ENCODE measurements at regions of chr16 and their contacts with region 1.

Region 1: DNA sequence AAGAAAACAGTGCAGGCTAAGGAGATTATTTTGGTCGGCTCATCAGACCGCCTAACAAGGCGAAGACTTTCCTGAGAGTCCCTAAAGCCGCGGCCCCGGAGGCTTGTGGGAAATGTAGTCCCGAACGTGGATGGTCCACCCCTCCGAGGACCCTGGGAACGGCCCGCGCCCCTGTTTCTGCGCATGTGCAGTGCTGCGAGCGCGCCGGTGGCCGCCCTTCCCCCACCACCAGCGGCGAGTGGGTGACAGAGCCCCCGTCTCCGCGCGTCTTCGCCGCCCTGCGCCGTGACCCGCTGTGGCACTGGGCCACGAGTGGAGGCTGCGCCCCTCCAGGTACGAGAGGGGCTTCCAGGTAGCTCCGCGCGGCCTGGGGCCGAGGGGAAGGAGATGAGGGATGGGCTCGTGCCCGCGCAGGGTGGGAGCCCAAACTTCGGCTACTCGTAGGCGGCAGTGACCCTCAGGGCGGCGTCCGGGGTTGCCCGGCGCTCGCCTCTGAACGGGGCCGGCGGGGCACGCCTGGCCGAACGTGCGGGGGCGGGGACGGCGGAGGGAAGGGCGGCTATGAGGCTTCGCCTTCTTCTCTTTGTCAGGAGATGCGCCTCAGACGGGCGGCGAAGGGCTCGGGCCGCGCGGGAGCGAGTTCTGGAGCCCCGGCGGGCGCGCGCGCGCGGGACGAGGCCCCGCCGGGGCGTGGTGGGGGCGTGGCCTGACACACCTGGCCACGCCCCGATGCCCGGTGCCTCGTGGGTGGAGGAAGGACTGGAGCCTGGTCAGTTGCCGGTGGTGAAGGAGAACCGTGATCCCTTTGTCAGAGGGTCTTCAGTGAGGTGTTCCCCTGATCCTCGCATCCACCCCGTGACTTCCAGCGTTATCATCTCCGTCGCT is at the start of gene ZFP1:
- DNase-seq: peak; percentile 83 to 98
- H3K4me3 ChIP-seq: peak within 1 kb of the TSS; percentile 99 to 100
- H3K27ac ChIP-seq: peak within 1 kb of the TSS; percentile 93 to 99
- H3K4me1 ChIP-seq: peaks cover 0 to 6% of the 10 kb centered on the region in 2 donors
- H3K27me3 ChIP-seq: no peaks in the 10 kb centered on the region
- CTCF ChIP-seq: no peak
- total RNA-seq, gene ZFP1: 6.8 TPM

Region 2: DNA sequence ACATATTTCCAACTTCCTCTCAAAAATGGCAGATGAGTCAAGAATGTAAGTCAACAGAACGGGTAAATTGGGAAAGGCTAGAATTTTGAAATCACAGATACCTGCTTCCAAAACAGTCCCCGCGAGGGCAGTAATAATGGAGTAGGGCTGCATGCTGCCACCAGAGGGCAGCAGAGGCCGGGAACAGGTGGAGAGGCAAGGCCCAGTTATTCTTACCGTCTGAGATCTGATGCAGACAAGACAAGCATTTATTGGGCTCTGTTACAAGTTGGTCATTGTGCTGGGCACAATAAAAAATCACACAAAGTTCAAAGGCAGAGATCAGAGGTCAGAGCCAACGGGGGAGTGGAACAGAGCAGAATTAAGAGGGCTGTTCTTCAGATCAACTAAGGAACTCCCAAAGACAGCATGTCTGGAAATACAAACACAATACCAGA is 439.1 kb before region 1 on chr16:
- intact Hi-C with region 1: loop called (anchors 10 kb)
- DNase-seq: peak in 1 of 2 donors; percentile 81
- H3K4me3 ChIP-seq: no peak overlapping the region
- H3K27ac ChIP-seq: no peak overlapping the region
- H3K4me1 ChIP-seq: no peaks in the 10 kb centered on the region
- H3K27me3 ChIP-seq: no peaks in the 10 kb centered on the region
- CTCF ChIP-seq: peak; percentile 82 to 95 (median 93)

Region 3: GRCh38 chr16:74984535-74985296 is 163.8 kb before region 1 on chr16 and contains the start of gene WDR59:
- intact Hi-C with region 1: loop called (anchors 1 kb)
- DNase-seq: peak; percentile 100
- H3K4me3 ChIP-seq: peak within 1 kb of the TSS; percentile 81 to 83
- H3K27ac ChIP-seq: peak within 1 kb of the TSS; percentile 58 to 73
- H3K4me1 ChIP-seq: peaks cover 0 to 9% of the 10 kb centered on the region in 2 donors
- H3K27me3 ChIP-seq: no peaks in the 10 kb centered on the region
- CTCF ChIP-seq: no peak
- total RNA-seq, gene WDR59: 22.0 TPM

Region 4: GRCh38 chr16:75116081-75116910 is 32.3 kb before region 1 on chr16 and contains the start of gene LDHD:
- intact Hi-C with region 1: loop called (anchors 2 kb)
- DNase-seq: peak; percentile 55 to 95
- H3K4me3 ChIP-seq: peak within 1 kb of the TSS; percentile 49 to 58
- H3K27ac ChIP-seq: peak within 1 kb of the TSS; percentile 28 to 54
- H3K4me1 ChIP-seq: peaks cover 0 to 16% of the 10 kb centered on the region in 2 donors
- H3K27me3 ChIP-seq: no peaks in the 10 kb centered on the region
- CTCF ChIP-seq: no peak
- total RNA-seq, gene LDHD: 7.5 TPM

Region 5: GRCh38 chr16:75198135-75198600 is 49.6 kb after region 1 on chr16:
- intact Hi-C with region 1: loop called (anchors 1 kb)
- DNase-seq: no peak
- H3K4me3 ChIP-seq: no peak overlapping the region
- H3K27ac ChIP-seq: no peak overlapping the region
- H3K4me1 ChIP-seq: peaks cover 0 to 15% of the 10 kb centered on the region in 2 donors
- H3K27me3 ChIP-seq: no peaks in the 10 kb centered on the region
- CTCF ChIP-seq: no peak